WTC11 (cell line): ENCODE measurements at regions of chr7 and their contacts with region 1.

Region 1: GRCh38 chr7:43260980-43261878 is 148.8 kb downstream of the HECW1 start:
- DNase-seq: peak; percentile 85
- ATAC-seq: peak; percentile 98
- H3K4me3 Mint-ChIP-seq: no peak overlapping the region
- H3K27ac Mint-ChIP-seq: no peak overlapping the region
- H3K4me1 Mint-ChIP-seq: 0 out of 2 replicates have a peak, but pooled peaks cover 3% of the 10 kb centered on the region
- H3K27me3 Mint-ChIP-seq: no peaks in the 10 kb centered on the region
- CTCF ChIP-seq: peak; percentile 97

Region 2: DNA sequence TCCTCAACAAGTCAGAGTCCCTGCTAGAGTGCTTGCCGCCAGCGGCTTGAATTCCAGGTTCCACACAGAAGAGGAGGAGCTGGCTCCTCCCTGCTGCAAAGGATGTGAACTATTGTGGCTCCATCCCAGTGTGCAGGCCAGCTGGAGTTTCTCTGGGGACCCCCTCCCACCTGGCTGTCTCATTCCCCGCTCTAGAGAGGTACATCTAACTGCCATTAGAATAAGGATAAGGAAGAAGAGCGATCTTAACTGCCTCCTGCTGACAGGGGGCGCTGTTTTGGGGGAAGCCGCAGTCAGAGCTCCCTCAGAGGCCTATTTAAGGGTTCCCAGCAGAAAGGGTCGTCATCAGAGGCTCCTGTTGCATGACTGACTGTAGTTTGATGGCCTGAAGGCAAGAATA is 189.6 kb before region 1 on chr7:
- CTCF ChIA-PET with region 1: interaction called, 23 read pairs
- POLR2A ChIA-PET with region 1: no interaction called
- DNase-seq: peak; percentile 88
- ATAC-seq: peak; percentile 98
- H3K4me3 Mint-ChIP-seq: no peak overlapping the region
- H3K27ac Mint-ChIP-seq: no peak overlapping the region
- H3K4me1 Mint-ChIP-seq: peaks cover 24% of the 10 kb centered on the region
- H3K27me3 Mint-ChIP-seq: no peaks in the 10 kb centered on the region
- CTCF ChIP-seq: peak; percentile 85

Region 3: GRCh38 chr7:43193893-43194292 is 67.3 kb before region 1 on chr7:
- CTCF ChIA-PET with region 1: interaction called, 4 read pairs
- POLR2A ChIA-PET with region 1: interaction called, 10 read pairs
- DNase-seq: no peak
- ATAC-seq: peak; percentile 75
- H3K4me3 Mint-ChIP-seq: no peak overlapping the region
- H3K27ac Mint-ChIP-seq: peak overlapping the region; percentile 69
- H3K4me1 Mint-ChIP-seq: peaks cover 29% of the 10 kb centered on the region
- H3K27me3 Mint-ChIP-seq: no peaks in the 10 kb centered on the region
- CTCF ChIP-seq: no peak

Region 4: GRCh38 chr7:43248961-43249822 is 12.0 kb before region 1 on chr7:
- CTCF ChIA-PET with region 1: interaction called, 16 read pairs
- POLR2A ChIA-PET with region 1: no interaction called
- DNase-seq: no peak
- ATAC-seq: peak; percentile 47
- H3K4me3 Mint-ChIP-seq: no peak overlapping the region
- H3K27ac Mint-ChIP-seq: no peak overlapping the region; the same call in 1 of the 2 replicates
- H3K4me1 Mint-ChIP-seq: peaks cover 23% of the 10 kb centered on the region
- H3K27me3 Mint-ChIP-seq: no peaks in the 10 kb centered on the region
- CTCF ChIP-seq: no peak

Region 5: GRCh38 chr7:43278088-43278644 is 16.9 kb after region 1 on chr7:
- CTCF ChIA-PET with region 1: interaction called, 12 read pairs
- POLR2A ChIA-PET with region 1: no interaction called
- DNase-seq: no peak
- ATAC-seq: no peak
- H3K4me3 Mint-ChIP-seq: no peak overlapping the region
- H3K27ac Mint-ChIP-seq: no peak overlapping the region
- H3K4me1 Mint-ChIP-seq: peaks cover 26% of the 10 kb centered on the region
- H3K27me3 Mint-ChIP-seq: peaks cover 4% of the 10 kb centered on the region; the same call in 1 of the 2 replicates
- CTCF ChIP-seq: no peak